ENCODE measurements at regions of chr15 and their contacts with region 1.

Region 1: DNA sequence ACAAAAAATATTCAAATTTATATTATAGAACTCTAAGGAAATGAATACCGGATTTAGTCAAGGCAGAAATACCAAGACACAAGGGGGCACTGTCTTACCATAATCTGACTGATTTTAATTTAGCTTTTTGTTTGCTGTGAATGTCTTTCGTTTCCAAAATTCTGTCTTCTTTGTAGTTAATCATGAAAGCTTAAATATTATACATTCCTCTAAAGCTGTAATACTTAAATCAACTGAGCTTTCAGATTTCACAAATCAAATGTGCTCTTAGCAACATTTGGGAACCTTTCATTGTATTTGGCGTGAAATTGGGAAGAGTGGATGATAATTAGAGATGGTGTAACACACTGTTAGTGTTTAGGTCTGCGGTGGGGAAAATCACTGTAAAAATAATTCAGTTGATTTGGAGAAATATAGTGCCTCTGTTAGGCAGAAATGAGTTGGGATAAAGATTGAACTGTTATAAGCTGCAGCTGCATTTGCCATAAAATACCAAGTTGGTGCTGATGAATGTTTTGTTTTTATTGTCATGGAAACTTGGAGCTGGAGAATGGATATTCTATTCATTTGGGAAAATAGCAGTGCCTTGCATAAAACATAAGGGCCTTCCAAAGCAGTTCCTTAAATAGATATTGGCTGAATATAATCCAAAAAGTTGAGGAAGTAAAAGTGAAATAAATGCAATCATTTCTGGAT is 228.2 kb downstream of the TCF12 start:
- DNase-seq: no peak
- ATAC-seq: no peak
- H3K4me3 Mint-ChIP-seq: peak overlapping the region; percentile 45
- H3K27ac Mint-ChIP-seq: peak overlapping the region; percentile 88
- H3K4me1 Mint-ChIP-seq: peaks cover 19% of the 10 kb centered on the region
- H3K27me3 Mint-ChIP-seq: no peaks in the 10 kb centered on the region
- CTCF ChIP-seq: peak; percentile 45

Region 2: DNA sequence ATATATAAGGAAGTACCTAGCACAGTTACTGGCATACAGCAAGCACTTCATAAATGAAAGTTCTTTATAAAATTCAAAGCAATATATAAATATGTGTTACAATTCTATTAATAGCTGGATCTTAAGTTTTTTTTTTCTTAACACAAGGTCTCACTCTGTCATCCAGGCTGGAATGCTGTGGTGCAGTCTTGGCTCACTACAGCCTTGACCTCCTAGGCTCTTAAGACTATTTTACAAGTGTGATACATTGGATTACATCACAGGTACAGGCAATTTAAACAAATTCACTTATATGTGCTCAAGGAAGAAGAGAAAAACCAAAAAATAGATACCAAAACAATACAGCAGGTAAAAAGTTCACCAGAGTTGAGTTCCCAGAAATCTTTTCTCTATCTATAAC is 473.9 kb before region 1 on chr15:
- CTCF ChIA-PET with region 1: no interaction called
- POLR2A ChIA-PET with region 1: no interaction called
- DNase-seq: no peak
- ATAC-seq: no peak
- H3K4me3 Mint-ChIP-seq: no peak overlapping the region
- H3K27ac Mint-ChIP-seq: no peak overlapping the region
- H3K4me1 Mint-ChIP-seq: no peaks in the 10 kb centered on the region
- H3K27me3 Mint-ChIP-seq: no peaks in the 10 kb centered on the region
- CTCF ChIP-seq: no peak

Region 3: DNA sequence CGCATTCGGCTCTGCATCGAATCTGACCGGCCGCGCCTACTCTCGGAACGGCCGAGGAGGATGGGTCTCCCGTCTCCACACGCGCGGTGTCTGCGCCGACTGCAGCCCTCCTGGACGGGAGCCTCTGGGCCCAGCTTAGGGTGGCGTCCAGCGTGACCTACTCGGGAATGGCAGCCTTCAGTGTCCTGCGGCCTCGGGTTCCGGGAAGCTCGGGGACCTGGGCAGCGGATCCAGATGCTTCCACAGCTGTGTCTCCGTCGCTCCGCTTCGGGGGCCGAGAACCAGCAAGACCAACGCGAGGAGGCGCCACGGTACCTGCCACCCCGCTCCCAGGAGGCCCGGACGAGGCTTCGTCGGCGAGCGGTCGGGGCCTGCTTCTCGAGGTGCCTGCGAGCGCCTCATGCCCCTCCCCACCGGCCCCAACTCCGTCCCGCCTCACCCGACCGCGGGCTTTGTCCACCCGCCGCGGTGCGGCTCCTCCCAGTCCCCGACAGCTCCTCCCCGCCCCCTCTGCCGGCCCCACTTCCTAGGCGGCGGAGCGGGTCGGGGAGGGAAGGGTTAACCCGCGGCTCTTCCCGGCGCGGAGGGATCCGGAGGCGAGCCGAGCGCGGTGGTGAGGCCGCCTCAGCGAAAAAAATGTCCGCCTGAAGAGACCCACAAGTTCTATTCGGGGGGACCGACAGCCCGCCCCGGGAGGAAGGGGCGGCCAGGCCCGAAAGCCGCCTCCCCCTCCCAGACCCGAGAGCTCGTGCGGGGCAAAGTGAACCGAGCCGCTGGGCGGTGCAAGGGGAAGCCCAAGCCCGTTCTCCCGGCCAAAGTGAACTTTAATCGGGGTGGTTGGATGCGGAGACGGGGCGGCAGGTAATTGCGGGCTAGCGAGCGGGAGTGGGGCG is 228.4 kb before region 1 on chr15 and contains the start of gene TCF12:
- CTCF ChIA-PET with region 1: no interaction called
- POLR2A ChIA-PET with region 1: no interaction called
- DNase-seq: peak; percentile 96
- ATAC-seq: peak; percentile 93
- H3K4me3 Mint-ChIP-seq: peak within 1 kb of the TSS; percentile 86
- H3K27ac Mint-ChIP-seq: no peak within 1 kb of the TSS
- H3K4me1 Mint-ChIP-seq: peaks cover 37% of the 10 kb centered on the region
- H3K27me3 Mint-ChIP-seq: peaks cover 17% of the 10 kb centered on the region
- CTCF ChIP-seq: no peak
- total RNA-seq, gene TCF12: 73.2 to 92.9 TPM (median 81.3 TPM) in 3 replicates

Region 4: GRCh38 chr15:57165992-57166391 is 19.3 kb after region 1 on chr15:
- CTCF ChIA-PET with region 1: no interaction called
- POLR2A ChIA-PET with region 1: no interaction called
- DNase-seq: no peak
- ATAC-seq: no peak
- H3K4me3 Mint-ChIP-seq: no peak overlapping the region
- H3K27ac Mint-ChIP-seq: no peak overlapping the region
- H3K4me1 Mint-ChIP-seq: peaks cover 12% of the 10 kb centered on the region
- H3K27me3 Mint-ChIP-seq: no peaks in the 10 kb centered on the region
- CTCF ChIP-seq: no peak

Region 5: GRCh38 chr15:57213862-57214261 is 67.2 kb after region 1 on chr15:
- CTCF ChIA-PET with region 1: interaction called, 10 read pairs
- POLR2A ChIA-PET with region 1: no interaction called
- DNase-seq: no peak
- ATAC-seq: no peak; the same call in 1 of the 2 replicates
- H3K4me3 Mint-ChIP-seq: no peak overlapping the region
- H3K27ac Mint-ChIP-seq: no peak overlapping the region
- H3K4me1 Mint-ChIP-seq: peaks cover 61% of the 10 kb centered on the region
- H3K27me3 Mint-ChIP-seq: no peaks in the 10 kb centered on the region
- CTCF ChIP-seq: no peak

Region 6: DNA sequence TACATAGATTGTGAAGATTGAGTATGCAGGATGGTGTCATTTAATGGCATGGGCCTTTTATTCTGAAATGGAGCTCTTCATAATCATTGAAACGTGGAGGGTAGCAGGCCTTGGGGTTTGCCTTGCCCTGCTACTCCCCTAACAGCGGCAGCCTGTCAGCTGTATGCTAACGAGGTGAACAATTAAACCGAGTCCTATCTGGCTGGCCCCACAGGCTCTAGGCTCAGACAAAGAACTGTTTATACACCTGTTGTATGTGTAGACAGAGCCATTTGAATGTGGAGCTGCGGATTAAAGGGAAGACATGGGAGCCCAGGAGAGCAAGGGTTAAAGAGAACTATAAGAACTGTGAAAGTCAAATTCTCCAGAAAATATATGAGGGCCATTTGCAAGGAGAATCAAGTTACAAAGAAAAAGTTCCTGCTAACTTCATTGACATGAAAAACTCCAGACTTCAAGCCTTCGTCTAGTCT is 113.0 kb after region 1 on chr15:
- CTCF ChIA-PET with region 1: interaction called, 11 read pairs
- POLR2A ChIA-PET with region 1: no interaction called
- DNase-seq: peak; percentile 65
- ATAC-seq: peak; percentile 100
- H3K4me3 Mint-ChIP-seq: peak overlapping the region; percentile 64
- H3K27ac Mint-ChIP-seq: peak overlapping the region; percentile 94
- H3K4me1 Mint-ChIP-seq: peaks cover 42% of the 10 kb centered on the region
- H3K27me3 Mint-ChIP-seq: no peaks in the 10 kb centered on the region
- CTCF ChIP-seq: no peak

Measured in WTC11 (cell line).